KBM-7 (cell line): ENCODE measurements at regions of chr9 and their contacts with region 1.

Region 1: DNA sequence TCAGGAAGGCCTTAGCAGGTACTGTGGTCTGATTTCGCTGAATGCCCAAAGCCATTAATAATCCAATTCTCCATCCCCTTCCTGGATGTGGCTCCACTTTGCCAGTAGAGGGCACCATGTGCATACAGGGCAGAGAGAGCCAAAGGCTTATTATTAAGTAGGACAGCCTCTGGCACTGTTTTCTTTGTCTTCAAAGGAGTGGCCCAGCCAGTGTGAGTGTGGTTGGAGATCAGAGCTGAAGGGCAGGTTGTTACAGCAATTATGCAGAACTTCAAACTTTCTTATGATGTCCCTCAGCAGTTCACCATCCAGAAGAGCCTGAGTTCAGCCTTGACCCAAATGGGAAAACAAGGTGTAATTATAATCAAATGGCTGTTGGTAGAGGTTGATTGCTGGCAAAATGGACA is 38.6 kb upstream of the CEMIP2 start:
- DNase-seq: peak; percentile 78

Region 2: GRCh38 chr9:71541436-71541835 is 265.5 kb before region 1 on chr9:
- in situ Hi-C with region 1: no loop called
- DNase-seq: no peak

Region 3: GRCh38 chr9:71984403-71984802 is 177.5 kb after region 1 on chr9:
- in situ Hi-C with region 1: loop called (anchors 25 kb)
- DNase-seq: no peak